ENCODE measurements at regions of chr19 and their contacts with region 1.

Region 1: DNA sequence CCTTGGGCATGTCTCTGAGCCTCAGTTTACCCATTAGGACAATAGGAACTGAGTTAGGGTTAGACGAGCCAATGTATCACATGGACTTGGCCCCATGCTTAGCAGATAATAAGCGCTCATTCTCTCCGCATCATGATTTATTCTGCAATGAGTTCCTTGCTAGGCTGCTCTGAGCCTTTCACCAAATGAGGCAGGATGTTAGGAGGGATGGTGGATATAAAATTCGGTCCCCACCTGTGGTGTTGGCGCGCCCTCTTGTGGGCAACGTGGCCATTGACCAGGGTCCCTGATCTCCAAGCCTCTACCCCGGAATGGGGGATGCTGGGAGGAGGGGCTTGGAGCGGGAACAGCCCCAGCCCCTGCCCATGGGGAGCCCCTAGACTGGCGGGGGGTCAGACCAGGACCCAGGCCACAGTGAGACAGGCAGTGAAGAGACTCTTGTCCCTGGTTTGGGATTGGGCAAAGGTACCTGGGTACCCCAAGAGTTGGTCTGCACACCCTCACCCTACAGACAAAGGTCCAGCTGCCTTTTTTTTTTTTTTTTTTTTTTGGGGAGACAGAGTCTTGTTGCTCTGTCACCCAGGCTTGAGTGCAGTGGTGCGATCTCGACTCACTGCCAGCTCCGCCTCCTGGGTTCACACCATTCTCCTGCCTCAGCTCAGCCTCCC is 43.9 kb downstream of the CERS4 start:
- DNase-seq: peak; percentile 78 to 85 (median 81)
- ATAC-seq: peak; percentile 50
- H3K4me3 ChIP-seq: no peak overlapping the region
- H3K27ac ChIP-seq: no peak overlapping the region
- H3K4me1 ChIP-seq: peaks cover 16% of the 10 kb centered on the region
- H3K27me3 ChIP-seq: no peaks in the 10 kb centered on the region
- CTCF ChIP-seq: peak; percentile 78 to 95 (median 91)
- POLR2A ChIP-seq: no peak

Region 2: DNA sequence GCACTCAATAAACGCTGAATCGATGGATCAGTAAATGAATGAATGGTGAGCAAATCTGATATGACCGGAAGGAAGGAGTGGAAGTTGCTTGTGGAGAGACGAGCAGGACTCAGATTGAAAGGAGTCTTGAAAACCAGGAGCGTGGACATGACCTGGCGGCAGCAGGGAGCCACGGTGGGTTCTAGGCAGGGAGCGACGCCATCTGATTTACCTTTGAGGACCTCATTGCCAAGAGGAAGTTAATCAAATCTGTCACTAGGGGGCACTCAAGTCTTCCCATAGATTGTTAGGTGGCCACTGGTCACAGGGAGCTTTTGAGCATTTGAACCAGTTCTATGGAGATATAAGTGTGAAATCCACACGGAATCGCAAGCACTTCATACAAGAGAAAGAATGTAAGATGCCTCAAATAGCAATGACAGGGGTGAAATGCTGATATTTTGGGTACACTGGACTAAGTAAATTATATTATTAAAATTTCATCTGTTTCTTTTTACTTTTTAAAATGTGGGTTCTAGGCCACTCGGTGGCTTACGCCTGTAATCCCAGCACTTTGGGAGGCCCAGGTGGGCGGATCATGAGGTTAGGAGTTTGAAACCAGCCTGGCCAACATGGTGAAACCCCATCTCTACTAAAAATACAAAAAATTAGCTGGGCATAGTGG is 94.5 kb before region 1 on chr19:
- intact Hi-C with region 1: loop called (anchors 5 kb)
- DNase-seq: peak; percentile 66 to 86 (median 77)
- ATAC-seq: peak; percentile 60
- H3K4me3 ChIP-seq: no peak overlapping the region
- H3K27ac ChIP-seq: no peak overlapping the region
- H3K4me1 ChIP-seq: peaks cover 13% of the 10 kb centered on the region
- H3K27me3 ChIP-seq: no peaks in the 10 kb centered on the region
- CTCF ChIP-seq: peak; percentile 46 to 92 (median 81)
- POLR2A ChIP-seq: no peak

Region 3: DNA sequence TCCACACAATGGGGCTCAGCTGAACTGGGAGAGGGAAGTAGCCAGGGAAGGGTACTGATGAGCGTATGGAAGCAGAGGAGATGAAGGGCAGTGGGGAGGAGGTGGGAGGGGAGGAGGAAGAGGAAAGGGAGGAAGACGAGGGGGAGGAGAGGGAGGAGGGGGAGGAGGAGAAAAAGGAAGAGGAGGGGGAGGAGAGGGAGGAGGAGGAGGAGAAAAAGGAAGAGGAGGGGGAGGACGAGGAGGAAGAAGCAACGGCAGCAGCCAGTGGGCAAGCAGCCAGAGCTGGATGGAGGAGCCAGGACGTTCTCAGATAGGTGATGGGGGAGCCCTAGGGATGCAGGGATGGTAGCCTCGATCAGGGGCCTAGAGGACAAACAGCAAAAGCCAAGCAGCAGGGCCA is 38.3 kb before region 1 on chr19:
- intact Hi-C with region 1: loop called (anchors 5 kb)
- DNase-seq: peak in 1 of 4 donors; percentile 22
- ATAC-seq: no peak
- H3K4me3 ChIP-seq: no peak overlapping the region
- H3K27ac ChIP-seq: peak overlapping the region in 1 of 4 donors; percentile 5
- H3K4me1 ChIP-seq: peaks cover 55% of the 10 kb centered on the region
- H3K27me3 ChIP-seq: no peaks in the 10 kb centered on the region
- CTCF ChIP-seq: no peak
- POLR2A ChIP-seq: no peak

Region 4: DNA sequence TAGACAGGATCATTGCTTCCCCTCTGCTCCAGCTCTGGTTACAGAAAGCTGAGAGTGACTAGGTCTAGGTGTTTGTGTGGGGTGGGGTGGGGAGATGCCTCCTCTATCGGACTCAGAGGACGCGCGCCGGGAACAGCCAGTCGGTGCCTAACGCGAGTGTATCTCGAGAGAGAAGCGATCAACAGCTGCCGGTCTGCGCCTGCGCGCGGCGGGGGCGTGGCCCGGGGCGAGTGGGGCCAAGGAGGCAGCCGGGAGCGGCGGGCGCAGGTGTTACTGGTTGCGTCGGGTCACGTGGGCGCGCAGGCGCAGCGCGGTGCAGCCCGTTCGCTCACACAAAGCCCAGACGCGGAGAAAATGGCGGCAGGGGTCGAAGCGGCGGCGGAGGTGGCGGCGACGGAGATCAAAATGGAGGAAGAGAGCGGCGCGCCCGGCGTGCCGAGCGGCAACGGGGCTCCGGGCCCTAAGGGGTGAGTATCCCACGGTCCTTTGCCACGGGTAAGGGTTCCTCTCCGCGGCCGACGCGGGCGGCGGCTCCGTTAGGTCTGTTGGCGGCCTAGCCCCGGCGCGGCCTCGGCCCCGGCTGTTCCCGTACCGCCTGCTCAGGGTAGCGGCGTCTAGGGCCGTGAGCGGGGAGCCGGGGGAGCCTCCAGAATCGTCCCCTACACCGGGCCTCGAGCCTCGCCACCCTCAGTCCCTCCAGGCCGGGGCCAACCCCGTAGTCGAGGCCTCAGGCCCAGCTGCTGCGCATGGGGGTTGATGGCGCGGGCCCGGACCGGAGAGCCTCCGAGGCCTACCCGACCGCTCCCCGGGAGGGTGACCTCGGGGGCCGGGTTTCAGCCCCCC is 191.8 kb after region 1 on chr19 and contains the start of gene HNRNPM:
- intact Hi-C with region 1: no loop called
- DNase-seq: peak; percentile 99 to 100 (median 100)
- ATAC-seq: peak; percentile 96
- H3K4me3 ChIP-seq: peak within 1 kb of the TSS; percentile 79 to 91
- H3K27ac ChIP-seq: peak within 1 kb of the TSS; percentile 86 to 95 (median 88)
- H3K4me1 ChIP-seq: peaks cover 34% of the 10 kb centered on the region
- H3K27me3 ChIP-seq: no peaks in the 10 kb centered on the region
- CTCF ChIP-seq: no peak
- POLR2A ChIP-seq: peak; percentile 97 to 98 (median 97)
- total RNA-seq, gene HNRNPM: 64.9 to 146 TPM

Measured in body of pancreas (tissue), 4 donors.